CD4-positive, alpha-beta T cell (primary cell): ENCODE measurements at regions of chr18 and their contacts with region 1.

Region 1: GRCh38 chr18:63253428-63254372 is 65.9 kb downstream of the BCL2 start:
- DNase-seq: peak in 1 of 14 experiments; percentile 22
- ATAC-seq: no peak
- H3K4me3 ChIP-seq: no peak overlapping the region
- H3K4me3 Mint-ChIP-seq: peak overlapping the region; percentile 50
- H3K27ac ChIP-seq: peak overlapping the region in 1 of 2 donors; percentile 26
- H3K27ac Mint-ChIP-seq: peak overlapping the region; percentile 63
- H3K4me1 ChIP-seq: peaks cover 19% of the 10 kb centered on the region
- H3K4me1 Mint-ChIP-seq: peaks cover 81% of the 10 kb centered on the region
- H3K27me3 ChIP-seq: no peaks in the 10 kb centered on the region
- H3K27me3 Mint-ChIP-seq: no peaks in the 10 kb centered on the region
- CTCF ChIP-seq: no peak

Region 2: GRCh38 chr18:62963507-62963906 is 290.2 kb before region 1 on chr18:
- CTCF ChIA-PET with region 1: no interaction called
- POLR2A ChIA-PET with region 1: no interaction called
- intact Hi-C with region 1: no loop called
- DNase-seq: no peak
- ATAC-seq: no peak
- H3K4me3 ChIP-seq: no peak overlapping the region
- H3K4me3 Mint-ChIP-seq: no peak overlapping the region
- H3K27ac ChIP-seq: no peak overlapping the region
- H3K27ac Mint-ChIP-seq: no peak overlapping the region
- H3K4me1 ChIP-seq: no peaks in the 10 kb centered on the region
- H3K4me1 Mint-ChIP-seq: no peaks in the 10 kb centered on the region
- H3K27me3 ChIP-seq: no peaks in the 10 kb centered on the region
- H3K27me3 Mint-ChIP-seq: no peaks in the 10 kb centered on the region
- CTCF ChIP-seq: no peak

Region 3: GRCh38 chr18:63054901-63055584 is 198.7 kb before region 1 on chr18:
- CTCF ChIA-PET with region 1: no interaction called
- POLR2A ChIA-PET with region 1: no interaction called
- intact Hi-C with region 1: no loop called
- DNase-seq: no peak
- ATAC-seq: no peak
- H3K4me3 ChIP-seq: no peak overlapping the region
- H3K4me3 Mint-ChIP-seq: no peak overlapping the region
- H3K27ac ChIP-seq: no peak overlapping the region
- H3K27ac Mint-ChIP-seq: no peak overlapping the region
- H3K4me1 ChIP-seq: no peaks in the 10 kb centered on the region
- H3K4me1 Mint-ChIP-seq: no peaks in the 10 kb centered on the region
- H3K27me3 ChIP-seq: no peaks in the 10 kb centered on the region
- H3K27me3 Mint-ChIP-seq: no peaks in the 10 kb centered on the region
- CTCF ChIP-seq: no peak

Region 4: GRCh38 chr18:63292831-63293683 is 39.4 kb after region 1 on chr18:
- CTCF ChIA-PET with region 1: interaction called, 3 read pairs
- POLR2A ChIA-PET with region 1: no interaction called
- intact Hi-C with region 1: loop called in 1 of 2 experiments (anchors 5 kb)
- DNase-seq: peak in 10 of 14 experiments; percentile 11 to 60 (median 38)
- ATAC-seq: peak; percentile 38
- H3K4me3 ChIP-seq: peak overlapping the region; percentile 6
- H3K4me3 Mint-ChIP-seq: peak overlapping the region; percentile 26
- H3K27ac ChIP-seq: peak overlapping the region; percentile 14 to 35
- H3K27ac Mint-ChIP-seq: no peak overlapping the region
- H3K4me1 ChIP-seq: peaks cover 68% of the 10 kb centered on the region
- H3K4me1 Mint-ChIP-seq: peaks cover 10% of the 10 kb centered on the region
- H3K27me3 ChIP-seq: no peaks in the 10 kb centered on the region
- H3K27me3 Mint-ChIP-seq: no peaks in the 10 kb centered on the region
- CTCF ChIP-seq: no peak